Right lobe of liver (tissue), 6 donors: ENCODE measurements at regions of chr3 and their contacts with region 1.

Region 1: DNA sequence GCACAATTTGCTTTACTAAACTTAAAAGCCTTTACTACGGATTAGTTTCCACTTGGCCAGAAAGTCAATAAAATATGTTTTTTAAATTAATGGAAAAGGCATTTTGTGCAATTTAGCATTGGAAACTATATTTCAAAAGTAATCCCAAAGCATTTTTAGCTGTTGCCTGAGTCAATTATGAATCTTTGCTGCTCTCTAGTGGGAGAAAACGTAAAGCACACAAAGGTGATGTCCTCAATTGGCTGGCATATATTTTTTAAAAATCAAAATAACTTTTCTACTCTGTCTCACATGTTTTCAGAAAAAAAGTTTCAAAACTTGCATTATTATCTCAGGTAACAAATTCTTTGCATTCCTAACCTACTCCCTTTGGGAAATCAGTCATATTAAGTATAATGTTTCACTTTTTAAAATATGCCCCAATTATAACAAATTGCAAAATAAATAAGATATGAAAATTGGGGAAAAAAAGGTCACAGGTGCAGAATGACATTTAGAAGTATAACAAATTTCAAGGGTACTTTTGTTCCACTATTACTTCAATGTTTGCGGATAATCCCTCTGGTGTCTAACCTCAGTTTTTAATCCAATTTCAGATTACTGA is 47.2 kb upstream of the TEX55 start:
- DNase-seq: no peak
- ATAC-seq: peak; percentile 54 to 62 (median 56)
- H3K4me3 ChIP-seq: no peak overlapping the region
- H3K27ac ChIP-seq: no peak overlapping the region
- H3K4me1 ChIP-seq: no peaks in the 10 kb centered on the region
- H3K27me3 ChIP-seq: no peaks in the 10 kb centered on the region
- CTCF ChIP-seq: peak; percentile 65 to 74 (median 70)
- POLR2A ChIP-seq: no peak

Region 2: DNA sequence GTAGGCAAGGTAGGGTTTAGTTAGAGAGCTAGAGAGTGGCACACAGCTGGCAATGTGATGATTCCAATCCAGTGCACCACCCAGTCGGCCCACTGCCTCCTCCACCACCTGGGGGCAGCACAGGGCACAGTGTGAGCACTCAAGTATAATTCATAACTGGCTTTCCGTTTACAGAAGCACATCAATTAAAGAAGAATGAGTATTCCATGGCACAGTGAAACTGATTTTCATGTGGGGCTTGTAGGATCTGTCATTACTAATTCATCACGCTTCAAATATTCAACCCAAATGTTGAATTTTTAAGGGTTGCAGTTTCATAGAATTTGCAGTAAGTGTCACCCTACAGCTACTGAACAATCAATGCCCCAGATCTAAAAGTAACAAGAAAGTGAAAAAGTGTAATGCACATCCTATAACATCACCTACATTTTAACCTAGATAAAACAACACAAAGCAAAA is 213.9 kb before region 1 on chr3:
- intact Hi-C with region 1: loop called (anchors 5 kb)
- DNase-seq: peak; percentile 71 to 79 (median 75)
- ATAC-seq: peak; percentile 88 to 93 (median 91)
- H3K4me3 ChIP-seq: no peak overlapping the region
- H3K27ac ChIP-seq: no peak overlapping the region
- H3K4me1 ChIP-seq: no peaks in the 10 kb centered on the region
- H3K27me3 ChIP-seq: no peaks in the 10 kb centered on the region
- CTCF ChIP-seq: peak; percentile 61 to 94 (median 91)
- POLR2A ChIP-seq: no peak